Ascending aorta (tissue), 2 donors: ENCODE measurements at regions of chr22 and their contacts with region 1.

Region 1: GRCh38 chr22:31345331-31346254 is 553 bp downstream of the PATZ1 start:
- DNase-seq: peak in 1 of 2 donors; percentile 88
- H3K4me3 ChIP-seq: peak overlapping the region; percentile 56 to 93
- H3K27ac ChIP-seq: peak overlapping the region; percentile 71 to 74
- H3K4me1 ChIP-seq: peaks cover 0 to 27% of the 10 kb centered on the region in 2 donors
- H3K27me3 ChIP-seq: no peaks in the 10 kb centered on the region
- CTCF ChIP-seq: peak; percentile 77 to 97 (median 86)

Region 2: DNA sequence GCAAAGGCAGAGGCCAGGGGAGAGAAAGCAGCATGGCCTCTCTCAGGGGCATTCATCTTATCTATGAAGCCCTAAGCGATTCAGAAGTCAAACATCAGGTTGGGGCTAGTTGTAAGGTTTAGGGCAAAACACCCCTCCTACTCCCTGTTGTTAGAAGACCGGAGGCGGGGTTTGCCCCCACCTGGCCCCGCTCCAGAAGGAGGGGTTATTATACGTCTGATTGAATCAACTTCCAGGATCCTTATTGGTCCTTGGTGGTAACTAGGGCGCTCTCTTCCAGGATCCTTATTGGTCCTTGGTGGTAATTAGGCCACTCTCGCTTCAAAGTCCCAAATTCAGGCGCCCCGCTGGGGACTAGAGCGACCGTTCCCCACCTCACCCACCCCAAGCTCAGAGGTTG is 276.6 kb before region 1 on chr22:
- intact Hi-C with region 1: no loop called
- DNase-seq: no peak
- H3K4me3 ChIP-seq: no peak overlapping the region
- H3K27ac ChIP-seq: no peak overlapping the region
- H3K4me1 ChIP-seq: no peaks in the 10 kb centered on the region
- H3K27me3 ChIP-seq: no peaks in the 10 kb centered on the region
- CTCF ChIP-seq: no peak

Region 3: GRCh38 chr22:31399211-31400028 is 53.8 kb after region 1 on chr22 and contains the start of gene DRG1:
- intact Hi-C with region 1: loop called (anchors 1 kb)
- DNase-seq: peak; percentile 90 to 98
- H3K4me3 ChIP-seq: peak within 1 kb of the TSS; percentile 71 to 75
- H3K27ac ChIP-seq: peak within 1 kb of the TSS; percentile 54 to 75
- H3K4me1 ChIP-seq: peaks cover 8 to 11% of the 10 kb centered on the region in 2 donors
- H3K27me3 ChIP-seq: no peaks in the 10 kb centered on the region
- CTCF ChIP-seq: no peak
- total RNA-seq, gene DRG1: 6.9 TPM

Region 4: DNA sequence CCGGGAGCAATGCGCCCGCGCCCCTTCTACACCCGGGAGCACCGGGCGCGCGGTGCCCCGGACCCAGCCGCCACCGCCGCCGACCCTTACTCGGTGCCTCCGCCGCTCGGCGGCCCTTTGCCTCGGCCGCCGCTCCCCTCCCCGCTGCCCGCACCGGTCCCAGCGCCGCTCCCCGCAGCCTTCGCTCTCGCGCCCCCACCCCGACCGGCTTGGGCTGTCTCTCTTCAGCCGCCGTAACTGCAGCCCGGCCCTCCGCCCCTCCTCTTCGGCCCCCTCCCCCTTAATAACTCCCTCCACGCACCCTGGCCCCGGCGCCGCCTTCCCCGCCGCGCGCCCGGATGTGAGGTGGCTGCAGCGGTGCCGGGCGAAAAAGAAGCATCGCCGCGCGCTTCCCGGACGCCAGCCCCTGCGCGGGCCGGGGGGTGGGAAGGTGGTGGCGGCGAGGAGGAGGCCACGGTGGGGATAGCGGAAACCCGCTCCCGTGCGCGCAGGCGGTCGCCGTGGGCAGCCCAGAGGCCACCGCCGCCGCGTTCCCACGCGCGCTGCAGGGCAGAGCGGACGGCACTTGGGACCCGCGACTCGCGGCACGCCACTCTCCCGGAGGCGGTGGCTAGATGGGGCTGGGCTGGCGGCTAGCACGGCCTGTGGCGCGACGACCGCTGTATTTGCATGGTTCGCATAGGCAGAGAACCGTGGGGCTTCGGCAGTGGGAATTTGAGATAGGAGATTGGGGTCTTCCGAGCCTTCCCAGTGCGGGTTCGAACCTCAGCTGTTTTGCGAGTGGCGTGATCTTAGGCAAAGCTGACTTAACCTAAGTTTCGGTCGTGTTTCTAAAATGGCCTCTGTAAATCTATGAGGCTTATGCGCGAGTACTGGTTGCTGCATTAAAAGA is 144.3 kb after region 1 on chr22 and contains the start of gene EIF4ENIF1:
- intact Hi-C with region 1: loop called (anchors 5 kb)
- DNase-seq: peak; percentile 53 to 92
- H3K4me3 ChIP-seq: peak within 1 kb of the TSS; percentile 79 to 91
- H3K27ac ChIP-seq: peak within 1 kb of the TSS; percentile 93 to 98
- H3K4me1 ChIP-seq: peaks cover 5 to 12% of the 10 kb centered on the region in 2 donors
- H3K27me3 ChIP-seq: no peaks in the 10 kb centered on the region
- CTCF ChIP-seq: peak in 1 of 3 experiments; percentile 30
- total RNA-seq, gene EIF4ENIF1: 12.7 TPM